IMR-90 (cell line): ENCODE measurements at regions of chr17 and their contacts with region 1.

Region 1: DNA sequence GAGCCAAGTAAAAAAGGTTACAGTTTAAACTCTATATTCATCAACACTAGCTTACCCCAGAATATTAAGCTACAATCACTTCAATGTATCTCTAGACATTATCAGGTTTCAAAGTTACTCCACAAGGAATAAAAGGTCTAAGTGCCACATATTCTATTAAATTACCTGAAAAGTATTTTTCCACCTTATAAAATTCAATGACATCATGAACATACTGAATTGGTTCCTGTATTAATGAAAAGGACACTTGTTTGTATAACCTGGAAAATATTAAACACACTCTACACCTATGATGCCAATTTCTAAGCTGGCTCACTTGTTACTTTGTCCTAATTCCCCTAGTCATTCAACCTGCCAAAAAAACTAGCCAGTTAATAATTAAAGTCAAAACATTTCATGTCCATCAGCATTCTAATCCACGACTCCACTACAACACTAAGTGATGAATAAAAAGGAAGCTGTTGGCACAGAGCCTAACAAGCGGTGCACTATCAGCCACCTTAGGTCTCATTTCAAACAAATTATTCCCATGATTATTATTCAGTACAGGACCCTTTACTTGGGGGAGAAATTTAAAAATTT is 12.2 kb downstream of the MED13 start:
- DNase-seq: no peak
- ATAC-seq: no peak
- H3K4me3 ChIP-seq: no peak overlapping the region
- H3K27ac ChIP-seq: no peak overlapping the region
- H3K4me1 ChIP-seq: peaks cover 2% of the 10 kb centered on the region; the same call in 1 of the 2 replicates
- H3K27me3 ChIP-seq: no peaks in the 10 kb centered on the region
- CTCF ChIP-seq: no peak
- POLR2A ChIP-seq: no peak
- RAD21 ChIP-seq: no peak

Region 2: GRCh38 chr17:61986898-61987297 is 66.0 kb before region 1 on chr17:
- CTCF ChIA-PET with region 1: no interaction called
- POLR2A ChIA-PET with region 1: no interaction called
- dilution Hi-C with region 1: no loop called
- in situ Hi-C with region 1: no loop called
- intact Hi-C with region 1: loop called (anchors 5 kb)
- DNase-seq: no peak
- ATAC-seq: no peak
- H3K4me3 ChIP-seq: no peak overlapping the region
- H3K27ac ChIP-seq: no peak overlapping the region
- H3K4me1 ChIP-seq: no peaks in the 10 kb centered on the region
- H3K27me3 ChIP-seq: no peaks in the 10 kb centered on the region
- CTCF ChIP-seq: no peak
- POLR2A ChIP-seq: no peak
- RAD21 ChIP-seq: no peak

Region 3: GRCh38 chr17:62109378-62109902 is 56.6 kb after region 1 on chr17:
- CTCF ChIA-PET with region 1: no interaction called
- POLR2A ChIA-PET with region 1: no interaction called
- dilution Hi-C with region 1: no loop called
- in situ Hi-C with region 1: no loop called
- intact Hi-C with region 1: no loop called
- DNase-seq: peak; percentile 60
- ATAC-seq: peak; percentile 75
- H3K4me3 ChIP-seq: no peak overlapping the region
- H3K27ac ChIP-seq: no peak overlapping the region
- H3K4me1 ChIP-seq: no peaks in the 10 kb centered on the region
- H3K27me3 ChIP-seq: peaks cover 18% of the 10 kb centered on the region
- CTCF ChIP-seq: peak; percentile 65
- POLR2A ChIP-seq: no peak
- RAD21 ChIP-seq: peak; percentile 79